A673 (cell line): ENCODE measurements at regions of chr10 and their contacts with region 1.

Region 1: DNA sequence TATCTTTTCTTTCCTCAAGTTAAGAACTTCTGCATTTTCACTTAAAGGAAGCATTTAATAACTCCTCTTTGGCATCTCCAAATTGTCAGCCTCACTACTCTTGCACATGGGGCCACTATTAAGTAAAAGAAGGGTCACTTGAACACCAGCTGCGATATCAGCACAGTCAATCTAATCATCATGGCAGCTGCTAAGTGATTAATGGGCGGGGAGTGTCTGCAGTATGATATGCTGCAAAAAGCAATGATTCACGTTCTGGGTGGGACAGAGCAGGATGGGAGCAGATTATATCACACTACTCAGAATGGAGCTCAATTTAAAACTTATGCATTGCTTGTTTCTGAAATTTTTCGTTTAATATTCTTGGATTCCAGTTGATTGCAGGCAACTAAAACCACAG is 447.4 kb upstream of the PFKP start:
- DNase-seq: peak; percentile 36
- H3K4me3 ChIP-seq: no peak overlapping the region
- H3K27ac ChIP-seq: no peak overlapping the region
- H3K4me1 ChIP-seq: peaks cover 5% of the 10 kb centered on the region
- H3K27me3 ChIP-seq: peaks cover 14% of the 10 kb centered on the region
- CTCF ChIP-seq: no peak

Region 2: DNA sequence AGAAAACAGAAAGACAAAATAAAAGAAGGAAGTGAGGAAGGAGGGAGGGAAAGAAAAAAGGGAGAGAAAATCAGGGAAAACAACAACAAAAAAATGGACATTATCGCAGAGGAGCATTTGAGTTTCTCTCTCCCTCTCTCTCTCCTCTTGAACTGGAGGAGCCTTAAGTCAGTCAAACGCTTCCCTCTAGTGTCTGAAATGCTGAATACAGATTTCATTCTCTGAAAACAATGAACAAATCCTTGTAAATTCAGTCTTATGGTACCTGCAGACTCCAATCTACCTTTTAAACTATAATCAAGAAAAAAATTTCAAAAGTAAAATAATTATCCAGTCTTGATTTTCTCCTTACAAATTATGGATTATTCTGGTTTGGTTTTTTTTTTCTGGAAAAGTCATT is 358.2 kb after region 1 on chr10:
- CTCF ChIA-PET with region 1: no interaction called
- POLR2A ChIA-PET with region 1: no interaction called
- intact Hi-C with region 1: loop called (anchors 5 kb)
- DNase-seq: peak; percentile 79
- H3K4me3 ChIP-seq: no peak overlapping the region
- H3K27ac ChIP-seq: no peak overlapping the region
- H3K4me1 ChIP-seq: no peaks in the 10 kb centered on the region
- H3K27me3 ChIP-seq: no peaks in the 10 kb centered on the region
- CTCF ChIP-seq: peak; percentile 74

Region 3: DNA sequence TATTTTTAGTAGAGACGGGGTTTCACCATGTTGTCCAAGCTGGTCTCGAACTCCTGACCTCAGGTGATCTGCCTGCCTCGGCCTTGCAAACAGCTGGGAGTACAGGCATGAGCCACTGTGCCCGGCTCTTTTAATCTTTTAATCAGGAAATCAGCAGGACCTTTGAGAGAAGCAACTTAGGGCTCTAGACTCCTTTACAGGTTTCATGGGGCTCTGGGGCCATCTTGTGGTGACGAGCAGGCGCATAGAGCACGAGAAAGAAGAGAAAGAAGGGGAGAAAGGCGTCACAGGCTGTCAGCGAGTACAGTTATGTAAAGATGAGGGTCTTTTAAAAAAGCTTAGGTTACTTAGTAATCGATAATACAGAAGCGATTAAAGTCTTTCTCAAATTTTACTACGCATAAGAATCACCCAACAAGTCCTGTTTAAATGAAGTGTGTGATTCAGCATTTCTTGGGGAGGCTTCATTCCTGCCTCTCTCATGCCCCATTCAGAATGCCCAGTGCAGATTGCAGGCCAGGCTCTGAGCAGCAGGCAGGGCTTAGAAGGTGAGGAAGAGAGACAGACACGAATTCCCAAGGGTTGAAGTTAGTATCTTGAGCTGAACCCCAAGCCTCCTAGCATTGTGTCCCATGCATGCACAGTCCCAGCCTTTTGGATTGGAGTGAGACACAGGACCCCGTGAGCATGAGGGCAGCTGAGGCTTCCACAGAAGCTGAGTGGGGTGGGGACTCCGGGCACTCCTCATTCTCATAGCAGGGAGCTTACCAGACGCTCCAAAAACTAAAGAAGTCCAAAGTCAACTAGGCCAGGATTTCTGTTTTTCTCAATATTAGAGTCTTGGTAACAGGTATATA is 423.8 kb after region 1 on chr10:
- CTCF ChIA-PET with region 1: no interaction called
- POLR2A ChIA-PET with region 1: no interaction called
- intact Hi-C with region 1: loop called (anchors 5 kb)
- DNase-seq: peak; percentile 90
- H3K4me3 ChIP-seq: no peak overlapping the region
- H3K27ac ChIP-seq: no peak overlapping the region
- H3K4me1 ChIP-seq: no peaks in the 10 kb centered on the region
- H3K27me3 ChIP-seq: no peaks in the 10 kb centered on the region
- CTCF ChIP-seq: peak; percentile 88